PC-3 (cell line): ENCODE measurements at regions of chr4 and their contacts with region 1.

Region 1: DNA sequence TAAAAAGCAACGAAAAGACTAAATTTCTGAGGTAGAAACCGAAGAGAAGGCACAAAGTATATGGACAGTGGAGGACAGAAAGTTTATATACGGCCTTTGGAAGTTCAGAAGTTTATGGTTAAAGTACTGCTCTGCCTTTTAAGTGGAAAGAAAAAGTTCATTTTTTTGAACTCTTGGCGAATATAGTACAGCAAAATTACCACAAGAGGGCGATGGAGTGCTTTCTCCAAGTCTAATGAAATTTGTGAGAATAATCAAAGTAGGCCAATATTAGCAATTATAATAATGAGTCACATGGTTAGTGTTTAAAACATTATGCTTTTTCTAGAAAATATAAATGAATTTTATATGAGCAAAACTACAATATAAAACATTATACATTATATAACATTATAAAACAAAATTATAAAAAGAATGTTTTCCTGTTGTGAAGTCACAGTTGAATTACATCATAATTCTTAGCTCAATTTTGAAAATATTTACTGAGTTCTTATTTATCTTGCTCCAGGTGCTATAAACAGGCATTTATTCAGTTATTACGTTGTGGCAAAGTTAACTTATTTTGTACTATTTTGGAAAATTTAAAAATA is 136.2 kb upstream of the BMPR1B start:
- DNase-seq: peak; percentile 67
- ATAC-seq: peak; percentile 24; the same call in 1 of the 2 replicates
- H3K4me3 ChIP-seq: no peak overlapping the region
- H3K27ac ChIP-seq: no peak overlapping the region
- H3K4me1 ChIP-seq: peaks cover 4% of the 10 kb centered on the region; the same call in 1 of the 2 replicates
- H3K27me3 ChIP-seq: no peaks in the 10 kb centered on the region
- CTCF ChIP-seq: peak; percentile 74

Region 2: DNA sequence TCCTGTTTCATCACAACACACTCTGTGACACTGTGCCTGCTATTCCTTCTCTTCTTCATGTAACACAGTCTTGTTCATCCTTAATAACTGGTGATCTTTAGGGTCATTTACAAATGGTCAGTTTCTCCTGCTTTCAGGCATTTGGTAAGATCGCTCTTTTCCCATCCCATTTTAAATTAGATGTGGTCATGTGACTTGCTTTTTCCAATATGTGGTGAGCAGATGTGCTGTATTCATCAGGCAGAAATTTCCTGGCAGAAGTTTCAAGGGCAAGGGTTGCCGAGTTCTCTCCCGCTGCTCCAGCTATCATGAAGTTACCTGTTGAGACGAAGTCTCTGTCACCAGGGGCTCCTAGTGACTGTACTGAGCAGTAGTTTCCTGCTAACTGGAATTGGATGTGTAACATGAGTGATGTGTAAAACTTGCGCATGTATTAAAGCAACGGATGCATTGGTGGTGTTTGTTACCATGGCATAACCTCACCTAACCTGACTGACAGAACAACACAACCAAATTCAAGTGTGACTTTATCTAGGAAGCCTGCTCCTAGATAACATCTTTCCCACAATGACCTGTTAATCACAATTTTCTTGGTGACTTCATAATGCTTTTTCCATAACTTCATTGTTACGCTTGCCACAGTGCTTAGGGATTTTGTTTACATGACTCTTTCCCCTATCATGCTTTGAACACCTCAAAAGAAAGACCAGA is 106.6 kb after region 1 on chr4:
- CTCF ChIA-PET with region 1: no interaction called
- POLR2A ChIA-PET with region 1: no interaction called
- intact Hi-C with region 1: loop called (anchors 1 kb)
- DNase-seq: no peak
- ATAC-seq: no peak
- H3K4me3 ChIP-seq: no peak overlapping the region
- H3K27ac ChIP-seq: no peak overlapping the region
- H3K4me1 ChIP-seq: no peaks in the 10 kb centered on the region
- H3K27me3 ChIP-seq: no peaks in the 10 kb centered on the region
- CTCF ChIP-seq: no peak